SK-N-SH (cell line): ENCODE measurements at regions of chr21 and their contacts with region 1.

Region 1: GRCh38 chr21:17925000-17925610 is 105.9 kb upstream of the C21orf91 start:
- DNase-seq: peak; percentile 64
- H3K4me3 ChIP-seq: no peak overlapping the region; a peak in 1 of 4 replicates
- H3K27ac ChIP-seq: no peak overlapping the region
- H3K4me1 ChIP-seq: peaks cover 0 to 5% of the 10 kb centered on the region in 2 experiments; a peak in 1 of 4 replicates
- H3K27me3 ChIP-seq: no peaks in the 10 kb centered on the region
- CTCF ChIP-seq: peak; percentile 90
- EP300 ChIP-seq: no peak
- RAD21 ChIP-seq: peak; percentile 64

Region 2: GRCh38 chr21:17660449-17660848 is 264.7 kb before region 1 on chr21:
- CTCF ChIA-PET with region 1: interaction called, 15 read pairs
- POLR2A ChIA-PET with region 1: no interaction called
- DNase-seq: no peak
- H3K4me3 ChIP-seq: no peak overlapping the region
- H3K27ac ChIP-seq: no peak overlapping the region
- H3K4me1 ChIP-seq: peaks cover 0 to 2% of the 10 kb centered on the region in 2 experiments; a peak in 1 of 4 replicates
- H3K27me3 ChIP-seq: no peaks in the 10 kb centered on the region
- CTCF ChIP-seq: no peak
- EP300 ChIP-seq: no peak
- RAD21 ChIP-seq: no peak

Region 3: GRCh38 chr21:17673261-17674010 is 251.7 kb before region 1 on chr21:
- CTCF ChIA-PET with region 1: interaction called, 66 read pairs
- POLR2A ChIA-PET with region 1: no interaction called
- DNase-seq: no peak
- H3K4me3 ChIP-seq: no peak overlapping the region
- H3K27ac ChIP-seq: no peak overlapping the region
- H3K4me1 ChIP-seq: no peaks in the 10 kb centered on the region
- H3K27me3 ChIP-seq: no peaks in the 10 kb centered on the region; the same call in 1 of the 2 replicates
- CTCF ChIP-seq: no peak
- EP300 ChIP-seq: no peak
- RAD21 ChIP-seq: no peak

Region 4: DNA sequence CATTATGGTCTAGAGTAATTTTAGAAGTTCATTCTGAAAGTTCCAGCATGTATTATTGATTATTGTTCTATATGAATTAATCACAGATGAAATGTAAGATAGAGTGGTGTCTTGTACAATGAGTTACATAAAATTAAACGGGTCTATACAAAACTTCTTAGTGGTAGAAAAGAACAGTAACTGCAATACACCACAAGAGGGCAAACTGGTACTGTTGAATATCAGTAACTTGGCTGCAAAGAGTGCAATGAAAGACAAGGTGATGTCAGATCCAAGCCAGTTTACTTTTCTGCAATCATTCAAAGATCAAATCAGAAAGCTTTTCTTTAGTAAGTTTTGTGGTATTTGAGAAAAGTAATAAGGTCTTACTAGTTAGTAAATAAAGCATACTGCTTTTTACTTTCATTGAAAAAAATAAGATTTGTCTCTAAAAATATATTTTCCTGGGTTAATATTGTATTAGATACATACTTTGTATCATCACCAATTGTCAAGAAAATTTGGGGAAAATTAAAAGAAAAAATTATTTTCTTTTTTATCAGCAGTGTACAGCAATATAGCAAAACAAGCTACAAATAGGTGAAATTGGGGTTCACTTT is 246.0 kb before region 1 on chr21:
- CTCF ChIA-PET with region 1: interaction called, 66 read pairs
- POLR2A ChIA-PET with region 1: no interaction called
- DNase-seq: peak; percentile 56
- H3K4me3 ChIP-seq: peak overlapping the region in 1 of 2 experiments; percentile 14; a peak in 1 of 4 replicates
- H3K27ac ChIP-seq: no peak overlapping the region
- H3K4me1 ChIP-seq: no peaks in the 10 kb centered on the region
- H3K27me3 ChIP-seq: no peaks in the 10 kb centered on the region
- CTCF ChIP-seq: peak; percentile 87
- EP300 ChIP-seq: no peak
- RAD21 ChIP-seq: peak; percentile 96

Region 5: GRCh38 chr21:17688912-17689874 is 235.9 kb before region 1 on chr21:
- CTCF ChIA-PET with region 1: interaction called, 13 read pairs
- POLR2A ChIA-PET with region 1: no interaction called
- DNase-seq: no peak
- H3K4me3 ChIP-seq: peak overlapping the region in 1 of 2 experiments; percentile 1; a peak in 1 of 4 replicates
- H3K27ac ChIP-seq: no peak overlapping the region
- H3K4me1 ChIP-seq: peaks cover 0 to 5% of the 10 kb centered on the region in 2 experiments; a peak in 1 of 4 replicates
- H3K27me3 ChIP-seq: no peaks in the 10 kb centered on the region
- CTCF ChIP-seq: peak; percentile 52
- EP300 ChIP-seq: no peak
- RAD21 ChIP-seq: no peak; the same call in 1 of the 2 replicates

Region 6: DNA sequence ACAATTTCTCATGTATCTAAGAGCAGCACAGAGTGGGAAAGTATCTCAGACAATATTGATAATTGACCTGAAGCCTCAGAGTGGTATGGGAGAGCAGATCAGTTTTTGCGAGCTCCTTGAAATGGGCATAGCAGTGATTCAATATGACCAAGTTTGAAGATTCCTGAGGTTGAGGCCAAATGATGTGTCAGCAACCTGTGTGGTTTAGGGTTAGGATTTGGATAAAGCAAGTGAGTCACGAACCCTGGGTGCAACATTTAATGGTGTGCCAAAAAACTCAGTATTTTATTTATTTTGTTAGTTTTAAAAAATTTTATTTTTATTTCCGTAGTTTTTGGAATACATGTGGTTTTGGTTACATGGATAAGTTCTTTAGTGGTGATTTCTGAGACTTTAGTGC is 13.5 kb before region 1 on chr21:
- CTCF ChIA-PET with region 1: interaction called, 22 read pairs
- POLR2A ChIA-PET with region 1: no interaction called
- DNase-seq: no peak
- H3K4me3 ChIP-seq: no peak overlapping the region
- H3K27ac ChIP-seq: no peak overlapping the region
- H3K4me1 ChIP-seq: no peaks in the 10 kb centered on the region
- H3K27me3 ChIP-seq: no peaks in the 10 kb centered on the region
- CTCF ChIP-seq: no peak
- EP300 ChIP-seq: no peak
- RAD21 ChIP-seq: no peak

Region 7: GRCh38 chr21:17949421-17949820 is 24.3 kb after region 1 on chr21:
- CTCF ChIA-PET with region 1: interaction called, 18 read pairs
- POLR2A ChIA-PET with region 1: no interaction called
- DNase-seq: no peak
- H3K4me3 ChIP-seq: no peak overlapping the region
- H3K27ac ChIP-seq: no peak overlapping the region
- H3K4me1 ChIP-seq: no peaks in the 10 kb centered on the region
- H3K27me3 ChIP-seq: no peaks in the 10 kb centered on the region
- CTCF ChIP-seq: no peak
- EP300 ChIP-seq: no peak
- RAD21 ChIP-seq: no peak

Region 8: GRCh38 chr21:18608226-18608625 is 683.1 kb after region 1 on chr21:
- CTCF ChIA-PET with region 1: no interaction called
- POLR2A ChIA-PET with region 1: no interaction called
- DNase-seq: no peak
- H3K4me3 ChIP-seq: no peak overlapping the region
- H3K27ac ChIP-seq: no peak overlapping the region
- H3K4me1 ChIP-seq: no peaks in the 10 kb centered on the region
- H3K27me3 ChIP-seq: no peaks in the 10 kb centered on the region
- CTCF ChIP-seq: no peak
- EP300 ChIP-seq: no peak
- RAD21 ChIP-seq: no peak